GM10248 (cell line): ENCODE measurements at regions of chr2 and their contacts with region 1.

Region 1: DNA sequence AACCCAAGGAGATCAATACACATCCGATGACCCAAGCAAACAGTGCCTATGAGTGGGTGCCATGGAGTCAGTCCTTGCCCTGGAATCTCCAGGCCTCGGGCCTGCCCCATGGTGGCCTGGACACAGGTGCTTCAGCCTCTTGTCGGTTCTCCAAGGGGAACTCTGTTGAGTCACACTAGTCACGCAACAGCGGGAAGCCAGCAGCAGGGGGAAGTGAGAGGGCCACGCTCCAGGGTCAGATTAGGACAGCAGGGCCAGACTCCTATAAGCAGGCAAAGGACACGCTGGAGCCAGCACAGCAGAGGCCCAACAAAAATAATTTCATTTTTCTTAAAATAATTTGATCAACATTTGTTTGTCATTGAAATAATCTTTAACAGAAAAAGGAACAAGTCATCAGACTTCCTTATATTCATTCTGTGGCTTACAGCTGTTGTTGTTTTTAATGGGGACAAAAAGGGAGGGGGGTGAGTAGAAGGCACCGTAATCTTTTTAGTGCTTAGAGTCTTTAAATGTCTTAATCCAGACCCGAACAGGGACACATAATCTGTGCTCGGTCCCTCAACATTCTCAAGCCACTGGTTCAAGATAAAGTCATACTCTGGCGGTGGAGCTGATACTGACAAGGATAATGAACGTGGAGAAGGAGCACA is 16.4 kb upstream of the ARMC9 start:
- DNase-seq: peak; percentile 69
- CTCF ChIP-seq: no peak

Region 2: DNA sequence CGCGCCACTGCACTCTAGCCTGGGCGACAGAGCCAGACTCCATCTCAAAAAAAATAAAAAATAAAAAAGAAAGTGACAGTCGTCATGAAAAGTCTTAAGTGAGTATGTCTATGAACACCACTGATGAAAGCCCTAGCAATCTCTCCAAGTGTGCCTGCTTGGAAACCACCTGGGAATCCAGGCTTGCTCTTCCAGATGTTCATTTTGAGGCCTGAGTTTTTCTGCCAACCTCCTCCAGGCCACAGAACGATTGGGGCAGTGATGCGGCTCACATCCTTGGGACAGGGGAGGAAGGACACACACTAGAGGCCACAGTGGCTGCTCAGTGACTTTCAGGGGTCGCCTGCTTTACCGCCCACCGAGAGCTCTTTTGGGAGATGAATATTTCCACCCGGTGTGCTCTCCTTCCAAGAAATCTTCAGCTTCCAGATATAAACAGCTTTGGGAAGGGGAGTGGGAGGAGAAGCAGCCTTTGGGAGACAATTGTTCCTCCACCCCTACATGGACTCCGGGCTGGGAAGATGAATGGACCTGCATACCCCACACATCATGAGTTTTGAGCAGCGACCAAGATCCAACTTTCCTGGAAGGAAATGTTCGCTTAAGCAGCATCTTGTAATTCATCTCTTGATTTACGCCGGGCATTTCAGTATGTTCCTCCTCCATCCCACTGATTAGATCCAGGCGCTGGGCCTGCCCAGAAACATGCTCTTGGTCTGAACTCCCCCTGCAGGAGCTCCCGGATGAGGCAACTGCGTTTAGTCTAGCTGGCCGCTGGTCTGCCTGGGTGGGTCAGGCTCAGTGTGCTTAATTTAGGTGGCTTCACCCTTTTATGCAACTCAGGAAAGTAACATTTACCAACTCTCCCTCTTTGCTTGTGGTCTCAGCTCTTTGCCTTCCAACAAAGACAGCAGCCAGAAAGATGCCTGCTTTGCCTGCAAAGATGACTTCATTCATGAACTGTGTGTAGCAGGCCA is 10.2 kb after region 1 on chr2:
- CTCF ChIA-PET with region 1: interaction called, 18 read pairs
- POLR2A ChIA-PET with region 1: interaction called, 3 read pairs
- DNase-seq: no peak
- CTCF ChIP-seq: peak; percentile 26

Region 3: DNA sequence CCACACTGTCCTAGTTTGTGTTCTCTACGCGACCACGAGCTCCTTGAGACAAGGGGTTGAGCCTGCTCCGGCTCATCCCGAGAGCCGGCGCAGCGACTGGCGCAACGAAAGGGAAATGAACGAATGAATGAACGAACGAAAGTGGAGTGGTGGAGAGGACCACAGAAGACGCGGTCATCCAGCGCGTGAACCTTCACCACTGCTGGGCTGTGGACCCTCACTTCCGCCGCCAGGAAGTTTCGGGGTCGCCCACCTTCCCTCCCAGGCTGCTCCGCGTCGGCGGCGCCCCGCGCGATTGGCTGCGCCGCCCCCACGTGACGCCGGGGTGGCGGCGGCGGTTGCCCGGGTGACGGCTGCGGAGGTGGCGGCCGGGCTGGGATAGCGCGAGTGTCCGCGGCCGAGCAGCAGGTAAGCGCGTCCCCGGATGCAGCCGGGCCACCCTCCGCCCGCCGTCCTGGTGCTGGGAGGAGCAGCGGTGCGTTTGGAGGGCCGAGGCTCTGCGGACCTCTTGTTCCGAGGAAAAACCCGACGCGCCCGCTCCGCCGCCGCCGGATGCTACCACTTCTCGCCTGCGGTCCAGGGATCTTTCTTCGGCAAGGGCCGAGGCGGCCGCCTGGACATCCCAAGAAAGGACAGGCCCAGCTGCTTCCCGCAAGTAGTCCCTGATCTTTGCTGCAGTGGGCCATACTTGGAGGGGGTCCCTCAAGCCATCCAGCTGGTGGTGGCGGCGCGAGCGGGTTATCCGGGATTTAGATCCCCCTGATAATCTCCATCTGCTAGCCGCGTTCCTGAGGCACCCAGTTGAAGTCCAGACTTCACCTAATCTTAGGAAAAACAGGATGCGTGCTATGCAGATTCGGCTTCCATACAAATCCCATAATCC is 16.5 kb after region 1 on chr2 and contains the start of gene ARMC9:
- CTCF ChIA-PET with region 1: interaction called, 18 read pairs
- POLR2A ChIA-PET with region 1: interaction called, 3 read pairs
- DNase-seq: peak; percentile 96
- CTCF ChIP-seq: no peak